AG04449 (cell line): ENCODE measurements at regions of chr15 and their contacts with region 1.

Region 1: DNA sequence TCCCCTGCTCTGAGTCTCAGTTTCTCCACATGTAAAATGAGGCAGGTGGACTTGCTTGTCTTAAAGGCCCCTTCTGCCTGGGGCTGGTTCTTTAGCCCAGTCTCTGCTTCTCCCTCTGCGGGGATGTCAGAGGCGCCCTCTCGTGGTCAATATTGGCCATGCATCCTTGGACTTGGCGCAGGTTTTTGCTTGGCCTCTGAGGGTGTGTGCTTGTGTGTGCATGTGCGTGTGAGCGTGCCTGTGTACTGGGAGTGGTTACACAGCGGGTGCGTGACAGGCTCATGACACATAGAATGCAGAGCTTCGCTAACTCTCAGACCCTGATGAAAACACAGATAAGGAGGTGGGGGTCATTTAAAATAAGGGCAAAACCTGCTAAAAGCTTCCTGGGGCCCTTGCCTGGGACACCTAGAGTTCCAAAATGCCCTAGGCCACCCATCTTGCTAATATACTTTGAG is 160.9 kb downstream of the SMAD6 start:
- DNase-seq: peak; percentile 38
- H3K4me3 ChIP-seq: no peak overlapping the region
- CTCF ChIP-seq: peak; percentile 95

Region 2: DNA sequence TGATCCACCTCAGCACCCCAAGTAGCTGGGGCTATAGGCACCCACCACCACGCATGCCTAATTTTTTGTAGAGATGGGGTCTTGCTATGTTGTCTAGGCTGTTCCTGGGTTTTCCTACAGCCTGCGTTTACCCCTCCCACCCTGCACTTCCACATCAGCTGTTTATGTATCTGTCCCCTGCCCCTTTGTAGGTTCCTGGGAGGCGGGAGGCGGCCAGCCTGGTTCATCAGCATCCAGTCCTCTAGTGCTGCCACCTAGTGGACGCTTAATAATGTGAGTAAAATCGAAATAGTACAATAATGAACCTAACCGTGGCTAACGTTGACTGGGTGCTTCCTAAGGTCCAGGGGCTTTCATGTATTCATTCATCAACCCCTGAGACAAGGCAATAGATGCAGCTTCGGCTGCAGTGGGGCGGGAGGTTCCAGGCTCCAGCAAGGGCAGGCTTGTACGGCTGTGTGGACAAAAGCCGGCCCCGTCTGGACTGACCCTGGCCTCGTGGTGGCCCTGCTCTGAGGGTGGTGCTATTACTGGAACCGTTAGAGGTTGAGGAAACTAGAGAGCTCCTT is 295.9 kb before region 1 on chr15:
- CTCF ChIA-PET with region 1: interaction called, 11 read pairs
- POLR2A ChIA-PET with region 1: no interaction called
- DNase-seq: no peak
- H3K4me3 ChIP-seq: no peak overlapping the region
- CTCF ChIP-seq: peak; percentile 56

Region 3: GRCh38 chr15:66603301-66604179 is 259.4 kb before region 1 on chr15:
- CTCF ChIA-PET with region 1: interaction called, 36 read pairs
- POLR2A ChIA-PET with region 1: no interaction called
- DNase-seq: no peak
- H3K4me3 ChIP-seq: no peak overlapping the region
- CTCF ChIP-seq: peak; percentile 80

Region 4: DNA sequence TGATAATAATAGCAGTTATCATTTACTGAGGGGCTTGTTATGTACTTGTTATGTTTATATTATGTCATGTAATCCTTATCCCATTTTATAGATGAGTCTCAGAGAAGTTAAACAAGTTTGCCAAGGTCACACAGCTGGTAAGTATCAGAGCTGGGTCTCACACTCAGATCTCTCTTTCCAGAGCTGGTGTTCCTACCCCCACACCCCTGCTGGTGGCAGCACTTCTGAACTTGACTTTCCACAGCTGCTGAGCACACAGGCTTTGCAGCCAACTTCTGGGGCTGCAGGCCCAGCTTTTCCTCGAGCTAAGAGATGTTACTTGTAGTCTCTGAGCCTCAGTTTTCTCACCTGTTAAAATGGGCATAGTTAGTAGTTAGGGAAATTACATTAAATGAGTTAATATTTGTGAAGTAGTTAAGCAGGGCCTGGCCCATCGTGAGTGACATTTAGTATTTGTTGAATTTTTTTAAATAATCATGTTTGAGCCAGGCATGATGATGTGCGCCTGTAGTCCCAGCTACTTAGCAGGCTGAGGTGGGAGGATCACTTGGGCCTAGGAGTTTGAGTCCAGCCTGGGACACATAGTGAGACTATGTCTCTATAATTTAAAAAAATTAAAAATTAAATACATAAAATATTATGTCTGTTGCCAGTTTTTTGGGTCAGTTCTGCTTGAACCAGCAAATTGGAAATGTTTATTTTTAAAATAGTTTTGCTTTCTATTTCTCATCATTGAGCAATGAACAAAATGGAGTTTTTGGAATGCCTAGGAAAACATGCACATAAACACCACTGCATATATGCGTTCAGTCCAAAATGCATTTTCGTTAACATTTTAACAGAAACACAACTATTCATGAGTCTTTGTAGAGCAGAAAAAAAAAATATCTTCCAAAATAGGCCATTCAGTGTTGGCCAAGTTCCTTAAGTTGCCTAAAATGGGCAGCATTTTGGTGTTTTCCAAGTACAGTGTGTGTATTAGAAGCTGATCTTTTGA is 73.6 kb before region 1 on chr15:
- CTCF ChIA-PET with region 1: interaction called, 11 read pairs
- POLR2A ChIA-PET with region 1: no interaction called
- DNase-seq: no peak
- H3K4me3 ChIP-seq: no peak overlapping the region
- CTCF ChIP-seq: peak; percentile 65

Region 5: DNA sequence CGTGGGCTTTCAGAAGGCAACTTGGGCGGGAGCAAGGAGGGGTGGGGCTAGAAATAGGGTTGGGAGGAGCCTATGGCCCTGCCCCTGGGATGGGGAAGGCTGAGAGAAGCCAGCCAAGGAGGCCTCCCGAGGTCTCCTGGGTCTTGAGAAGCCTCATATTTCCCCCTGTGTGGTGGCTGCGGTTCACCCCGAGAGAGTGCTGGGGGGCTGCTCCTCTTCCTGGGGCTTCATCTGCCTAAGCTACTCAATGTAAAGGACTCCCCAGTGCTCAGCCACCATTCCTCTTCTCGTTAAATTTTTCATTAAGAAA is 13.5 kb after region 1 on chr15:
- CTCF ChIA-PET with region 1: interaction called, 17 read pairs
- POLR2A ChIA-PET with region 1: no interaction called
- DNase-seq: no peak
- H3K4me3 ChIP-seq: no peak overlapping the region
- CTCF ChIP-seq: no peak

Region 6: GRCh38 chr15:66882251-66883020 is 19.5 kb after region 1 on chr15:
- CTCF ChIA-PET with region 1: interaction called, 17 read pairs
- POLR2A ChIA-PET with region 1: interaction called, 3 read pairs
- DNase-seq: no peak
- H3K4me3 ChIP-seq: no peak overlapping the region
- CTCF ChIP-seq: no peak